ENCODE measurements at regions of chr12 and their contacts with region 1.

Region 1: DNA sequence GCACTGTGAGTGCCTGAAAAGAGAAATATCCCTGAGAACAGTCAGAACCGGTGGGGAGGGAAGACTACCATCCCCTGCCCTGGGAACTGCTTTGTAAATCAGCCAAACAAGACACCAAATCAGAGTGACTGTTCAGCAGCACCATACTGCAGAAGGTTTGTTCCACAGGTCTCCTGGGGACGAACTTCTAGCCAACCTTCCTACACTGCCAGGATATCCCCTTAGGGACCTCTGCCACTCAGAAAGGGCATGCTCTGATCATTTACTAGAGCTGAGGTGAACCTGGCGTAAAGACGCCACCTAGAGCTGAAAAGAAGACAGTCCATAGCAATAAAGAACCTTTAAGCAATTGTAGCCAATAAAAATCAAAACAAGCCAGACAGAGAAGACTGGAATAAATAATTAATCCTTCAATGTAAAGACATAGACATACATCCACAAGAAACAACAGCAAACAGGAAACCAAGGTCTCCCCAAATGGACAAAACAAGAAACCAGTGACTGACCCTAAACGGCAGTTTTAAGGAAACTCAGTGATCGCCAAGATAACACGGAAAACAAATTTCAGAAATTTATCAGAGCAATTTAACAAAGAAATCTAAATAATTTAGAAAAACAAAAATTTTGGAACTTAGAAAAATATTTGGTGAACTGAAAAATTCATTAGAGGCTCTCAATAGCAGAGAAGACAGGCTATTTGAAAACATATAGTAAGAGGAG is 228.1 kb upstream of the AMIGO2 start:
- DNase-seq: peak; percentile 74
- ATAC-seq: peak; percentile 88
- H3K4me3 Mint-ChIP-seq: peak overlapping the region; percentile 75
- H3K27ac Mint-ChIP-seq: peak overlapping the region; percentile 95
- H3K4me1 Mint-ChIP-seq: peaks cover 72% of the 10 kb centered on the region
- H3K27me3 Mint-ChIP-seq: no peaks in the 10 kb centered on the region
- CTCF ChIP-seq: peak; percentile 89

Region 2: DNA sequence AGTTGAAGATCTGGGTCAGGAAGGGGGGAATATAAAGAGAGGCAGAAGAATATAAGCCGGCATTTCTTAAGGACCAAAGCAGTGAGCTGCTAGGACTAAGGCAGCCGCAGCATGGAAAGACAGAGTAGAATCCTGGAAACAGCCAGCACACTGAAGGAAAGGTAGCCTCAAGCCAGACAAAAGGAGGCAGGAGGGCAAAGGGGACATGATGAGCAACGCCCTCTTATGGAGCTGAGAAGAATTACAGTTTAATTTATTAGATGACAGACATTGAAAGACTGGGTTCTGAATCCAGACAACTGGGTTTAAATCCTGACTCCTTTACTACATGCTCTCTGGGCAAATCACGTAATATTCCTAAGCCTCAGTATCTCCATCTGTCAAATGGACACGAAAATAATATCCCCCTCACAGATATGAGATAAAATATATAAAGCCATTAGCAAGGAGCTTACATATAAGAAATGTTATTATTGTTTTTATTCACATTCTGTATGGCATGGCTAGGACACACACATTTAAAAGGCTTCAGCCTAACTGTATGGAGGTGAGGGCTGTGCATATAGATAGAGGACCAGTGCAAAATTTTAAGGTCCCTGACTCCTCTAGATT is 236.5 kb before region 1 on chr12:
- CTCF ChIA-PET with region 1: interaction called, 11 read pairs
- POLR2A ChIA-PET with region 1: no interaction called
- intact Hi-C with region 1: no loop called
- DNase-seq: no peak
- ATAC-seq: no peak
- H3K4me3 Mint-ChIP-seq: no peak overlapping the region
- H3K27ac Mint-ChIP-seq: no peak overlapping the region
- H3K4me1 Mint-ChIP-seq: peaks cover 24% of the 10 kb centered on the region
- H3K27me3 Mint-ChIP-seq: no peaks in the 10 kb centered on the region
- CTCF ChIP-seq: peak; percentile 76

Region 3: GRCh38 chr12:47207340-47207717 is 100.5 kb before region 1 on chr12:
- CTCF ChIA-PET with region 1: interaction called, 10 read pairs
- POLR2A ChIA-PET with region 1: interaction called, 7 read pairs
- intact Hi-C with region 1: no loop called
- DNase-seq: peak; percentile 76
- ATAC-seq: peak; percentile 60
- H3K4me3 Mint-ChIP-seq: peak overlapping the region; percentile 79
- H3K27ac Mint-ChIP-seq: peak overlapping the region; percentile 96
- H3K4me1 Mint-ChIP-seq: peaks cover 69% of the 10 kb centered on the region
- H3K27me3 Mint-ChIP-seq: no peaks in the 10 kb centered on the region
- CTCF ChIP-seq: no peak

Region 4: GRCh38 chr12:47216150-47216677 is 91.6 kb before region 1 on chr12:
- CTCF ChIA-PET with region 1: interaction called, 7 read pairs
- POLR2A ChIA-PET with region 1: interaction called, 7 read pairs
- intact Hi-C with region 1: loop called (anchors 5 kb)
- DNase-seq: peak; percentile 87
- ATAC-seq: peak; percentile 52
- H3K4me3 Mint-ChIP-seq: peak overlapping the region; percentile 79
- H3K27ac Mint-ChIP-seq: peak overlapping the region; percentile 96
- H3K4me1 Mint-ChIP-seq: peaks cover 10% of the 10 kb centered on the region
- H3K27me3 Mint-ChIP-seq: no peaks in the 10 kb centered on the region
- CTCF ChIP-seq: no peak

Region 5: DNA sequence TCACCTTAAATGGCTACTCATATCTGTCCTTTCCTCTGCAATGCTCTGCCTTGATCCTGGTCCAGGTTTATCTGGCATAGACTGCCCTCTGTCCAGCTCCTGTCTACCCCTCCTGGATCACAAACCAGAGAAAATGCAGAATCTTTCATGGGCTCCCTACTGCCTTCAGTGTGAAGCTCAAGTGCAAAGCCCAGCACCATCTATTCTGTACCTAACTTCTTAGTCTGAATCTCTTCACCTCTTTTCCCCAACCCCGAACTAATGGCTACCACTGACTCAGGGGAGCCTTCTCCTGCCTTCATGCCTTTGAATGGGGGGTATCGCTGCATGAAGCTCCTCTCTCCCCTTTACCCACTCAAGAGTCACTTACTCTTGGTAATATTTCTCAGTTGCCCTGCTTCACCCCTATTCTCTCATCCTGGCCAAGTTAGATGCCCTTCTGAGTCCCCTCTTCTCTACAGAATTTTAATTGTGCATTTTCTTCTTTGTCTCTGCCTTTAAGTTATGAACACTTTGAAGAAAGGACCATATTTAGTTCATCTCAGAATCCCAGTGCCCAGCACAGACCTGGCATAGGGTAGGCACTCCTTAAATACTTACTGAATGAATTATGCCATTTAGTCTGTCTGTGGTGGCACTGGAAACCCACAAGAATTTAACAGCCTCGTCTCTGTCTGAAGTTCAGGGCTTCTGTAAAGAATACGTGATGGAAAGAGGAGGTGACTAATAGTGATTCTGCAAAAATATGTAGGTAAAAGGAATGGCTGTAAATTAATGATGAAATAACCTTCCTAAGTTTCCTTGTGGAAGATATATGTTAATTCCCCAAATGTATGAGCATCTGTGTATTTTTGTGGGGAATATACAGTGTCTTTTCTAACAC is 36.8 kb before region 1 on chr12:
- CTCF ChIA-PET with region 1: interaction called, 5 read pairs
- POLR2A ChIA-PET with region 1: interaction called, 3 read pairs
- intact Hi-C with region 1: loop called (anchors 5 kb)
- DNase-seq: peak; percentile 70
- ATAC-seq: peak; percentile 77
- H3K4me3 Mint-ChIP-seq: peak overlapping the region; percentile 51
- H3K27ac Mint-ChIP-seq: peak overlapping the region; percentile 84
- H3K4me1 Mint-ChIP-seq: peaks cover 66% of the 10 kb centered on the region
- H3K27me3 Mint-ChIP-seq: no peaks in the 10 kb centered on the region
- CTCF ChIP-seq: no peak

Region 6: DNA sequence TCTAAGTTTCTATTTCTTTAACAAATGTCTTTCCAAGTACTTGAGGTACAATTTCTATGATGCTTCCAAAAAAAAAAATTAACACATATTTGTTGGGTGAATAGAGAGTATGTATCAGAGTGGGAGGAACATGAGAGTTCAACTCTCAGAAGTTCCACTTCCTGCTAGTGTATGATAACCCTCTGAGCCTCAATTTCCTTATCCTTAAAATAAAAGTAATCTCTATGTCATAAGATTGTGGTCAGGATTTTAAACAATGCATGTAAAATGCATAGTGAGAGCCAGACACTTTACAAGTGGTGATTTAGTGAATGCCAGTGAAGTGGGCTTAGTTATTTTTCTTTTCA is 42.2 kb after region 1 on chr12:
- CTCF ChIA-PET with region 1: interaction called, 4 read pairs
- POLR2A ChIA-PET with region 1: interaction called, 3 read pairs
- intact Hi-C with region 1: loop called (anchors 5 kb)
- DNase-seq: no peak
- ATAC-seq: peak; percentile 83
- H3K4me3 Mint-ChIP-seq: peak overlapping the region; percentile 62
- H3K27ac Mint-ChIP-seq: peak overlapping the region; percentile 96
- H3K4me1 Mint-ChIP-seq: peaks cover 77% of the 10 kb centered on the region
- H3K27me3 Mint-ChIP-seq: no peaks in the 10 kb centered on the region
- CTCF ChIP-seq: no peak